ENCODE measurements at regions of chr6 and their contacts with region 1.

Region 1: GRCh38 chr6:87472525-87473418 is at the start of gene SLC35A1:
- DNase-seq: peak; percentile 74 to 90 (median 80)
- ATAC-seq: peak; percentile 89
- H3K4me3 ChIP-seq: peak within 1 kb of the TSS; percentile 92
- H3K4me3 Mint-ChIP-seq: peak within 1 kb of the TSS; percentile 92
- H3K27ac ChIP-seq: peak within 1 kb of the TSS; percentile 77 to 97
- H3K27ac Mint-ChIP-seq: peak within 1 kb of the TSS; percentile 93
- H3K4me1 ChIP-seq: peaks cover 13% of the 10 kb centered on the region
- H3K4me1 Mint-ChIP-seq: peaks cover 28% of the 10 kb centered on the region
- H3K27me3 ChIP-seq: no peaks in the 10 kb centered on the region
- H3K27me3 Mint-ChIP-seq: peaks cover 3% of the 10 kb centered on the region
- CTCF ChIP-seq: no peak
- total RNA-seq, gene SLC35A1: 3.8 to 4.9 TPM

Region 2: DNA sequence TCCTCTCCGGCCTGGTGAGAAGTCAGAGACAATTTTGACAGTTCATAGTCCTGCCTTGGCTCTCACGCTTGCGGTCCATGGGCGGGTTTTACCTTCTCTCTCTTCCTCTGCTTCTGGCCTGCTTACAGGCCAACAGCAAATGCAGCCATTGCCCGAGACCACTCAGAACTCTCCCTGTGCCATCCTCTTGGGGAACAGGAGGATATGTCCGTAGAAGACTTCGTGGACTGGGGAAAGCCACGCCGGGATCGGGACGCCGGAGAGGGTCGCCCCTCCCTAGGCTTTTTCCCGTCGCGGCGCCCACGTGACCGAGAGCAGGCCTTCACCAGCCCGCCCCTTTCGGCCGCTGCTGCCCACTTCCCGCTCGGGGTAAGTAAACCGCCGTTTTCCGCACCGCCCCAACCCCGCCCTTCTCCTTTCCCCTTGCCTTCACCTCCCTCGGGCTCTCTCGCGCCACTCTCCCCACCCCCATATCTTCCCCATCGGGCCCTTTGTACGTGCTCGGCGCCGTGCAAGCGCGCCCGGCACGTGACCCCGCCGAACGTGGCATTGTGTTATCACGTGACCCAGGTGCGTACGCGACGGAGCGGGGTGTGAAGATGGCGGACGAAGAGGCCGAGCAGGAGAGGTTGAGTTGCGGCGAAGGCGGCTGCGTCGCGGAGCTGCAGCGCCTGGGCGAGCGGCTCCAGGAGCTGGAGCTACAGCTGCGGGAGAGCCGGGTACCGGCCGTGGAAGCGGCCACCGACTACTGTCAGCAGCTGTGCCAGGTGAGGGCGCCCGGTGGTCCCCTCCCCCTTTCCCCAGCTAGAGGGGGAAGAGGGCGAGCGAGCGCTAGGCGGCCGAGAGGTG is 317.6 kb before region 1 on chr6 and contains the start of gene ZNF292:
- CTCF ChIA-PET with region 1: no interaction called
- POLR2A ChIA-PET with region 1: interaction called, 4 read pairs
- intact Hi-C with region 1: loop called in 1 of 2 experiments (anchors 2 kb)
- DNase-seq: peak; percentile 87 to 98 (median 92)
- ATAC-seq: peak; percentile 71
- H3K4me3 ChIP-seq: peak within 1 kb of the TSS; percentile 86
- H3K4me3 Mint-ChIP-seq: peak within 1 kb of the TSS; percentile 92
- H3K27ac ChIP-seq: peak within 1 kb of the TSS; percentile 95 to 96
- H3K27ac Mint-ChIP-seq: peak within 1 kb of the TSS; percentile 88
- H3K4me1 ChIP-seq: peaks cover 50% of the 10 kb centered on the region
- H3K4me1 Mint-ChIP-seq: peaks cover 62% of the 10 kb centered on the region
- H3K27me3 ChIP-seq: no peaks in the 10 kb centered on the region
- H3K27me3 Mint-ChIP-seq: no peaks in the 10 kb centered on the region
- CTCF ChIP-seq: no peak
- total RNA-seq, gene ZNF292: 81.5 to 82.5 TPM

Region 3: DNA sequence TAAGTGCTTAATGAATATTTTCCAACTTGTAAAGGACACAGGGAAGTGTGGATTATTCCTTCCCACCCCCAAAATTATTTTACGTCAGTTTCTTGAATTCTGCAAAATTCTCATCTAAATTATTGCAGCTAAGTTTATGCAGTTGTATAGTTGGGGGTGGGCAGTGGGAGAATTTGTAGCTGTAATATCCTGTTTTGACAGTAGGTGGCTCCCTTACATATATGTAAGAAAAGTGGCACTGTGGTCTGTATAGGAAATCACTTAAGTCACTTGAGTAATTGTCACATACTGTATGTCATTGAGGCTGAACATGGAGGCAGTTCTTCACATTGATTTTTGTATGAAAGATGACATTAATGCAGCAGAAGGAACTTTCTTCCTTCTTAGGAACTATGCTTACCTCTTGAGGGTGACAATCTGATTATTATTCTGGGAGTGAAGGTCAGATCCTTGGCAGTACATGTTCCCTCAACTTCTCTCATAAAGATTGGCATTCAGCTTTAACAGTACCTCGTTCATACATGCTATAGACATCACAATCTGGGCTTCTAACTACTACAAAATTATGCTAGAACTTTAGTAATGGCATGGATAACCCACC is 79.7 kb before region 1 on chr6:
- CTCF ChIA-PET with region 1: no interaction called
- POLR2A ChIA-PET with region 1: no interaction called
- intact Hi-C with region 1: loop called in 1 of 2 experiments (anchors 2 kb)
- DNase-seq: peak in 11 of 14 experiments; percentile 4 to 81 (median 16)
- ATAC-seq: peak; percentile 97
- H3K4me3 ChIP-seq: no peak overlapping the region
- H3K4me3 Mint-ChIP-seq: no peak overlapping the region
- H3K27ac ChIP-seq: no peak overlapping the region
- H3K27ac Mint-ChIP-seq: no peak overlapping the region
- H3K4me1 ChIP-seq: no peaks in the 10 kb centered on the region
- H3K4me1 Mint-ChIP-seq: no peaks in the 10 kb centered on the region
- H3K27me3 ChIP-seq: no peaks in the 10 kb centered on the region
- H3K27me3 Mint-ChIP-seq: no peaks in the 10 kb centered on the region
- CTCF ChIP-seq: peak; percentile 81

Region 4: GRCh38 chr6:87414329-87414728 is 58.4 kb before region 1 on chr6:
- CTCF ChIA-PET with region 1: no interaction called
- POLR2A ChIA-PET with region 1: interaction called, 10 read pairs
- intact Hi-C with region 1: loop called (anchors 2 to 5 kb)
- DNase-seq: no peak
- ATAC-seq: no peak
- H3K4me3 ChIP-seq: no peak overlapping the region
- H3K4me3 Mint-ChIP-seq: no peak overlapping the region
- H3K27ac ChIP-seq: no peak overlapping the region
- H3K27ac Mint-ChIP-seq: no peak overlapping the region
- H3K4me1 ChIP-seq: no peaks in the 10 kb centered on the region
- H3K4me1 Mint-ChIP-seq: no peaks in the 10 kb centered on the region
- H3K27me3 ChIP-seq: peaks cover 0 to 7% of the 10 kb centered on the region in 2 experiments
- H3K27me3 Mint-ChIP-seq: peaks cover 8% of the 10 kb centered on the region
- CTCF ChIP-seq: no peak

Region 5: GRCh38 chr6:88963139-88964090 is 1490.6 kb after region 1 on chr6 and contains the start of gene RNGTT:
- CTCF ChIA-PET with region 1: no interaction called
- POLR2A ChIA-PET with region 1: no interaction called
- intact Hi-C with region 1: loop called in 1 of 2 experiments (anchors 5 kb)
- DNase-seq: peak; percentile 94 to 99 (median 97)
- ATAC-seq: peak; percentile 98
- H3K4me3 ChIP-seq: peak within 1 kb of the TSS; percentile 88
- H3K4me3 Mint-ChIP-seq: peak within 1 kb of the TSS; percentile 96
- H3K27ac ChIP-seq: peak within 1 kb of the TSS; percentile 60 to 65
- H3K27ac Mint-ChIP-seq: peak within 1 kb of the TSS; percentile 82
- H3K4me1 ChIP-seq: peaks cover 15% of the 10 kb centered on the region
- H3K4me1 Mint-ChIP-seq: peaks cover 63% of the 10 kb centered on the region
- H3K27me3 ChIP-seq: no peaks in the 10 kb centered on the region
- H3K27me3 Mint-ChIP-seq: no peaks in the 10 kb centered on the region
- CTCF ChIP-seq: no peak
- total RNA-seq, gene RNGTT: 11.6 to 12.4 TPM